Activated CD4-positive, alpha-beta memory T cell treated with anti-CD3 and anti-CD28 coated beads, Interleukin-2, amount 10 ng/mL, durations not matched to agents 7 days and 5 days (primary cell): ENCODE measurements at regions of chrX and their contacts with region 1.

Region 1: DNA sequence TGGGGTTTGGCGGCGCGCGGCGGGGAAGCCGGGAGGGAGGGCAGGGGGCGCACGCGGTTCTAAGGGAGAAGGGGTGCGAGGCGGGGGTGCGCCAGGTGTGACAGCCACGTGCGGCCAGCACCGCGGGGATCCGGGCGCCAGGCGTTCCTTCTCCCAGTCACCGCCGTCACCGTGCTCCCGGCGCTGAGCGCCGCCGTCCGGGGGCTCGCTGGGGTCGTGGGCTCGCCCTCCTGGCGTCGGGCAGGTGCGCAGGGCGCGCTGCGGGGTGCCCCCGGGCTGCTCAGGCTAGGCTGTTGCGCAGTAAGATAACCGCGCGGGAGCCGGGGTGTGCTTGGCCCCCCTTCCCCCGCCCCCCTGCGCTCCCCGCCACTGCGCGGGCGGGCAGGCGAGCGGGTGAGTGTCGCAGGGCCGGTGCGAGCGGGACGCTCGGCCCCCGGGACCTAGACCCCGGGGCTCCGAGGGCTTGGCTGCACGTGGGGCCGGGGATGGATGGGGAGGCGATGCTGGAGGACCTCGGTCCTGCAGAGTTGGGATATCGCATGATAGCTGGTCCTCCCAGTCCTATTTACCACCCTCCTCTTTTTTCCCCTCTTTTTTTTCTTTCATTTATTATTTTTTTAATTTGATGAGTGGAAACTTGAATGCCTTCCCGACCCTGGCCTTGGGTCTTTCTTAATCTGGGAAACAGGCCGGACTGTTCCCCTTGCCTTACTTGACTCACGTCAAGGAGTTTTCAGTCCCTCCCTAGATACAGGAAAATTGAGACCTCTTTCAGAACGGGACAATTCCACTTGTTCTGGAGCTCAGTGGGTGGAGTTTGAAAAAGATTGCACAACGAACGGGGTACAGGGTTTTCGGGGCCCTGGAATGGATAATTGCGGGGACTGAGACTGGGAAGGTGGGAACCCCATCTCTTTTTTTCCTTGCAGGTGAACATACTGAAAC is 797 bp downstream of the TXLNG start:
- DNase-seq: peak; percentile 31
- H3K4me3 Mint-ChIP-seq: peak overlapping the region; percentile 98
- H3K27ac Mint-ChIP-seq: peak overlapping the region; percentile 16
- H3K4me1 Mint-ChIP-seq: peaks cover 19% of the 10 kb centered on the region
- H3K27me3 Mint-ChIP-seq: no peaks in the 10 kb centered on the region

Region 2: GRCh38 chrX:16719334-16720084 is 67.6 kb before region 1 on chrX and contains the start of gene SYAP1:
- CTCF ChIA-PET with region 1: no interaction called
- POLR2A ChIA-PET with region 1: interaction called, 13 read pairs
- DNase-seq: peak; percentile 92
- H3K4me3 Mint-ChIP-seq: peak within 1 kb of the TSS; percentile 88
- H3K27ac Mint-ChIP-seq: peak within 1 kb of the TSS; percentile 82
- H3K4me1 Mint-ChIP-seq: peaks cover 18% of the 10 kb centered on the region
- H3K27me3 Mint-ChIP-seq: no peaks in the 10 kb centered on the region
- total RNA-seq, gene SYAP1: 16.4 to 19.2 TPM

Region 3: DNA sequence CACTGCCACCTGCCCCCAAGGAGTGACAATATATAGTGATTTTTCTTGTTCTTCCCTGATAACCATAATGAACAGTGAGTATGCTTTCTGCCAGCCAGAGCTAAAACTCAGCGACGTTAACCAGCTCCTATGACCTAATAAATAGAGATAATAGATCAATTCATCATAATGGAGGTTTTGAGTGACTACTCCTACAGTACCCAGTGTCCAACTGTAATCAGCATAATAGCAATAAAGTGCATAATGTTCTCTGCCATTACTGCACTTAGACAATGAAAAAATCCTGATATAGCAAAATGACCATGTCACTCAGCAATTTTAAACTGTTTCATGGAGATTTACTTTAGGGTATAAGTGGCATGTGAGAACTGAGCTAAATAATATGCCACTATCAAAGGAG is 21.5 kb before region 1 on chrX:
- CTCF ChIA-PET with region 1: no interaction called
- POLR2A ChIA-PET with region 1: no interaction called
- DNase-seq: no peak
- H3K4me3 Mint-ChIP-seq: no peak overlapping the region
- H3K27ac Mint-ChIP-seq: no peak overlapping the region
- H3K4me1 Mint-ChIP-seq: no peaks in the 10 kb centered on the region
- H3K27me3 Mint-ChIP-seq: no peaks in the 10 kb centered on the region

Region 4: GRCh38 chrX:16970977-16971376 is 183.9 kb after region 1 on chrX:
- CTCF ChIA-PET with region 1: no interaction called
- POLR2A ChIA-PET with region 1: no interaction called
- DNase-seq: no peak
- H3K4me3 Mint-ChIP-seq: no peak overlapping the region
- H3K27ac Mint-ChIP-seq: no peak overlapping the region
- H3K4me1 Mint-ChIP-seq: no peaks in the 10 kb centered on the region
- H3K27me3 Mint-ChIP-seq: peaks cover 3% of the 10 kb centered on the region

Region 5: GRCh38 chrX:17038681-17039161 is 251.7 kb after region 1 on chrX:
- CTCF ChIA-PET with region 1: no interaction called
- POLR2A ChIA-PET with region 1: no interaction called
- DNase-seq: no peak
- H3K4me3 Mint-ChIP-seq: no peak overlapping the region
- H3K27ac Mint-ChIP-seq: no peak overlapping the region
- H3K4me1 Mint-ChIP-seq: peaks cover 6% of the 10 kb centered on the region
- H3K27me3 Mint-ChIP-seq: no peaks in the 10 kb centered on the region